Aorta (tissue), 5 donors: ENCODE measurements at regions of chr15 and their contacts with region 1.

Region 1: DNA sequence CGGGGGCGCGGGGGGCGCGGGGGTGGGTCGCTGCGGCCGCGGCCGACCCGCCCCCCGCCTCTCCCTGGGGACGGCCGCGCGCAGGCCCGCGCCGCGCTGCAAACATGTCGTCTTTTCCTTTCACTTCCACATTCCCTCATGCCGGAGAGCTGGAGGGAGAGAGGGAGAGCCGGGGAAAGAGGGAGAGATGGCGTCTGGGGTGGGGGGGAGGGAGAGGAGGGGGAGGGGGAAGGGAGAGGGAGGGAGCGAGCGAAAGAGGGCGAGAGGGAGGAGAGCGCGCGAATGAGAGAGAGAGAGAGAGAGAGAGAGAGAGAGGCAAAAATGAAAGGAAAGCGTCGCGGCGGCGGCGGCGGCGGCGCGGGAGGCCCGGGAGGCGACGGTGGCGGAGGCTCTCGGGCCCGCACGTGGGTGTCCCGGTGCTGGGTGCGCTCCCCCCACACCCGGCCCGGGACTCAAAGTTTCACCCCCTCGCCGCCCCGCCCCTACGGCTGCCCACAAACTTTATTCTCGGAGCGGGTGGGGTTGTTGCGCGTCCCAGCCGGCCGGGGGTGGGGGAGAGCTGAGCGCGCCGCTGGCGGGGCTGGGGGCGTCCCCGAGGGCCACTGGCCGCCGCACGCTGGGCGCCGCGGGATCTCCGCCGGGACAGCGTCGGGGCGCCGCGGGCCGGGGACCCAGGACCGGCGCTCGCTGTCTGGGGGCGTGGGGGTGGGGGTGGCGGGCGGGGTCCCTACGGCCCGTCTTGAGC is 731 bp downstream of the ZNF710 start:
- DNase-seq: peak; percentile 83 to 88
- ATAC-seq: peak; percentile 27
- H3K4me3 ChIP-seq: peak overlapping the region; percentile 82 to 99
- H3K27ac ChIP-seq: peak overlapping the region in 1 of 2 donors; percentile 2
- H3K4me1 ChIP-seq: no peaks in the 10 kb centered on the region
- H3K27me3 ChIP-seq: no peaks in the 10 kb centered on the region

Region 2: DNA sequence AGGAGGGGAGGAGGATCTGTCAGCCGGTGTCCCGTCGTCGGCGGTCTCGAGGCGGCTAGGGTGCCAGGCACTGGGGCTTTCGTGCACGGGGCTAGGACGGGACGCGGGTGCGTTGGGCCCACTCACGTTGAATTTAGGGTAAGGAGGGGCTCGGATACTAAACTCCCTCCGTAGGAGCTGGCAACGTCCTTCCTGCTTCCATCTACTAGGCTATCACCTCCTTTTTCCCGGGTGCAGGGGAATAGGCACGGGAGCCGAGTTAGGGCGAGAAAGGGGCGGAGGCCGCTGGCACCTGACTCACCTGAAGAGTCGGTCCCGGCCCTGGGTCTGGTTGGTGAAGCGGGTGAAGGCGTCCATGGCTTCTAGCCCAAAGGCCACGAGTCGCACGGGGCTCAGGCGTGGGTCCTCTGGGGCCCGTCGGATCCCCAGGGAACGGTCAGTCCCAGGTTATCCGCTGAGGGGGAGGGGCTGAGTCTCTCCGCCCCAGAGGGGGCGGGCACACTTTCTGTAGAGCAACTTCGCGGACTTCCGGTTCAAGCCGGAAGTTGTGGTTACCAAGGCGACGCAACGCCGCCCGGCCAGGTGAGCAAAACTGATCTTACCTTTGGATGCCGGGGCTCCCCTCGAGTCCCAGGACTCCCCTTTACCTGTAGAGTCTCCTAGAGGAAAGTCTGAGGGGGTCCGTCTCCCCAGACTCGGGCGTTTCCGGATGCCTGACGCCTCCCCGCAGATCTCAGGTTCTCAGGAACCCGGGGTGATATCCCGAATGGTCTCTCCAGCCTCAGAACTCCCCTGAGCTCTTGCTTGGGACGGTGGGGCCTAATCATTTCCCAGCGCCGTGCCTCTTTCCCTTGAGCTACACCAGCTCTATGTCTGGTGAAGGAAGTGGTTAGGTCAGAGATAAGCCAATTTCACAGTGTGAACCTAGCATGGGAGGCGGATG is 311.3 kb before region 1 on chr15 and contains the starts of genes PEX11A and WDR93:
- intact Hi-C with region 1: no loop called
- DNase-seq: peak; percentile 90 to 93
- ATAC-seq: peak; percentile 93
- H3K4me3 ChIP-seq: peak within 1 kb of the TSS; percentile 71 to 78
- H3K27ac ChIP-seq: no peak within 1 kb of the TSS
- H3K4me1 ChIP-seq: peaks cover 0 to 1% of the 10 kb centered on the region in 2 donors
- H3K27me3 ChIP-seq: no peaks in the 10 kb centered on the region
- total RNA-seq, gene PEX11A: 7.7 to 9.1 TPM
- total RNA-seq, gene WDR93: not detected

Region 3: DNA sequence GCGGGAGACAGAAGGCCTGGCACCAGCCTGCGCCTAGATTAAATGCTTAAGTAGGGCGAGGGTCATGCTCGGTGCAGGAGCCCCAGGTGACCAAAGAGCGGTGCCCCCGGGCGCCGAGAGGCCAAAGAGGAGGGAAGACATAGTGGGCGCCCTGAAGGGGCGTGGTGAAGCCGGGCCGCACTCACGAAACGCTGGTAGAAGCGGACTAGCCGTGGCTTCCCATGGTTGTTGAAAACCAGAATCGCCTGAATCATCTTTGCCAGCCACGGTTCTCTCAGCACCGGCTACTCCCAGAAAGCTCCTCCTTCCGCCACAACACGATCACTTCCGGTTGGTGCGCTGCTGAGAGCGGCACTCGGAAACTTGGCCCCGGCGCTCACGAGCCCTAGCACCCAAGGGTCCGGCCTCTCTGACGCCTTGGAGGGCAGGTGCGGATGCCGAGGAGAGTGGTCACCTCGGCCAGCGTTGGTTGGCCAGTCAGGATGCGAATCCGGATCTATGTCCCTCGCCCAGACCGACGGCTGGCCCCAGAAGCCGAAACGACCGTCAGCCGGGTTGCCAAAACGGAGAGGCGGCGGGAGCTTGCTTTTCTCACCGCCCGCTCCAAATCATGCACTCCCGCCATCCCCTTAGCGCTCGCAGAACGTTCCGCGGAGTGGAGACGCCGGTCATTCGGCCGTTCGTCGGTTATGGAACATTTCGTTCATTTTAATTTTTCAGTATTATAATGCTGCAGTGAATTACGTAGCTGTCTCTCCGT is 108.0 kb before region 1 on chr15 and contains the start of gene AP3S2:
- intact Hi-C with region 1: loop called in 1 of 2 experiments (anchors 5 kb)
- DNase-seq: peak; percentile 95
- ATAC-seq: peak; percentile 99
- H3K4me3 ChIP-seq: peak within 1 kb of the TSS; percentile 52 to 86
- H3K27ac ChIP-seq: peak within 1 kb of the TSS; percentile 31 to 43
- H3K4me1 ChIP-seq: no peaks in the 10 kb centered on the region
- H3K27me3 ChIP-seq: no peaks in the 10 kb centered on the region
- total RNA-seq, gene AP3S2: 24.5 to 33.2 TPM